Endothelial cell of umbilical vein (primary cell): ENCODE measurements at regions of chr2 and their contacts with region 1.

Region 1: DNA sequence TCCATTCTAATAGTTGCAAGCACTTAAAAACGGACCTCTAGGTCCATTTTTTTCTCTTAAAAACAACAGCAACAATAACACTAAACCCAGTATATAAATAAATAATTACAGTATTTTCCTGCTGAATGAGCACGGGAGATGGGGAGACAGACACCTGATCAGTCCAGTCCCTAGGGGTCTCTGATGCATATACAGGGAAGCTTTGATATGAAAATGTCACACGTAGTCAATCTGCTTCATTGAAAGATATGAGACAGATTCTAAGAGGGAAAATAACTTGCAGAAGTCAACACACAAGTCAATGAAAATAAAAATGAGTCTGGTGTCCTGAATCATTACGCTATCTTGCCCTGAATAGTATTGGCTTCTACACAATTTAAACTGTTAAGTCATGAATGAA is 523.3 kb upstream of the SLC8A1 start:
- DNase-seq: no peak
- H3K4me3 ChIP-seq: no peak overlapping the region
- H3K27ac ChIP-seq: no peak overlapping the region
- H3K4me1 ChIP-seq: no peaks in the 10 kb centered on the region
- H3K27me3 ChIP-seq: no peaks in the 10 kb centered on the region
- CTCF ChIP-seq: no peak
- POLR2A ChIP-seq: no peak

Region 2: GRCh38 chr2:41137036-41137435 is 161.9 kb after region 1 on chr2:
- CTCF ChIA-PET with region 1: no interaction called
- POLR2A ChIA-PET with region 1: no interaction called
- dilution Hi-C with region 1: no loop called
- intact Hi-C with region 1: loop called (anchors 5 kb)
- DNase-seq: peak; percentile 49
- H3K4me3 ChIP-seq: no peak overlapping the region
- H3K27ac ChIP-seq: no peak overlapping the region
- H3K4me1 ChIP-seq: no peaks in the 10 kb centered on the region
- H3K27me3 ChIP-seq: no peaks in the 10 kb centered on the region
- CTCF ChIP-seq: no peak
- POLR2A ChIP-seq: no peak